Activated CD4-positive, alpha-beta memory T cell treated with anti-CD3 and anti-CD28 coated beads for 36 hours (primary cell): ENCODE measurements at regions of chr16 and their contacts with region 1.

Region 1: DNA sequence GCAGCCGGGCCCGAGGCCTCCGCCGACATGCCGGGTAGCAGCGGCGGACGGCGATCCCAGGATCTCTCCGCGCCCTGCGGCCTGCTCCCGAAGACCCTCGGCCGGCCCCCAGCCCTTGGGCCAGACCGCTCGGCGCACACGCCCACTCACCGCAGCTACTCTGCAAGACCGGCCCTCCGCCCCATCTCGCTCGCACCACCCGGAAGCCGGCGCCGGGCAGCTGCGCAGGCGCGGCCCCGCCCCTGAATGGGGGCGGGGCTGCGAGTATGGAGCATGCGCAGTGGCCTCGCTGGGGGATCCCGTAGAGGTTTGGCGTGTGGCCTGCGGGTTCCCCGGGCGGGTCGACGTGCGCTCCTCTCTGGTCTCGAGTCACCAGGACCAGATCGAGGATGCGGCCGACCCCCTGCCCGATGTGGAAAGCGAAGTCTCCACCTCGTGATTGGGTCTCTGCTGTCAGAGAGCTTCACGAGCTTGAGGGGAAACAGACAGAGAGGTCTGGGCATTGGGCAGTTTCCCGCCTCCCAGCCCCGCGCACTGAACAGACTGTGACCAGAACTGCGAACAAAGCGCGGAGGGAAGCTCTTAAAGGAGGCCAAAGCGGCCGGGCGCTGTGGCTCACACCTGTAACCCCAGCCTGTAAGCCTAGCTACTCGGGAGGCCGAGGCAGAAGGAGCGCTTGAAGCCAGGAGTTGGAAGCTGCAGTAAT is at the start of gene KCTD13:
- DNase-seq: peak; percentile 93
- H3K4me3 Mint-ChIP-seq: peak within 1 kb of the TSS; percentile 82
- H3K27ac Mint-ChIP-seq: peak within 1 kb of the TSS; percentile 89
- H3K4me1 Mint-ChIP-seq: peaks cover 36% of the 10 kb centered on the region
- H3K27me3 Mint-ChIP-seq: no peaks in the 10 kb centered on the region
- total RNA-seq, gene KCTD13: 36.6 to 37.9 TPM

Region 2: GRCh38 chr16:29710227-29711219 is 215.6 kb before region 1 on chr16:
- CTCF ChIA-PET with region 1: no interaction called
- POLR2A ChIA-PET with region 1: no interaction called
- intact Hi-C with region 1: no loop called
- DNase-seq: peak; percentile 33
- H3K4me3 Mint-ChIP-seq: no peak overlapping the region
- H3K27ac Mint-ChIP-seq: no peak overlapping the region
- H3K4me1 Mint-ChIP-seq: peaks cover 15% of the 10 kb centered on the region
- H3K27me3 Mint-ChIP-seq: no peaks in the 10 kb centered on the region

Region 3: GRCh38 chr16:29815793-29816693 is 110.1 kb before region 1 on chr16 and contains the start of gene PAGR1:
- CTCF ChIA-PET with region 1: no interaction called
- POLR2A ChIA-PET with region 1: no interaction called
- intact Hi-C with region 1: no loop called
- DNase-seq: peak; percentile 99
- H3K4me3 Mint-ChIP-seq: peak within 1 kb of the TSS; percentile 98
- H3K27ac Mint-ChIP-seq: peak within 1 kb of the TSS; percentile 90
- H3K4me1 Mint-ChIP-seq: peaks cover 41% of the 10 kb centered on the region
- H3K27me3 Mint-ChIP-seq: no peaks in the 10 kb centered on the region
- total RNA-seq, gene PAGR1: 21.9 to 24.0 TPM

Region 4: GRCh38 chr16:29862884-29863668 is 63.1 kb before region 1 on chr16 and contains the start of gene CDIPT:
- CTCF ChIA-PET with region 1: no interaction called
- POLR2A ChIA-PET with region 1: interaction called, 7 read pairs
- intact Hi-C with region 1: loop called (anchors 2 kb)
- DNase-seq: peak; percentile 95
- H3K4me3 Mint-ChIP-seq: peak within 1 kb of the TSS; percentile 94
- H3K27ac Mint-ChIP-seq: peak within 1 kb of the TSS; percentile 92
- H3K4me1 Mint-ChIP-seq: peaks cover 18% of the 10 kb centered on the region
- H3K27me3 Mint-ChIP-seq: no peaks in the 10 kb centered on the region
- total RNA-seq, gene CDIPT: 39.5 to 43.9 TPM

Region 5: DNA sequence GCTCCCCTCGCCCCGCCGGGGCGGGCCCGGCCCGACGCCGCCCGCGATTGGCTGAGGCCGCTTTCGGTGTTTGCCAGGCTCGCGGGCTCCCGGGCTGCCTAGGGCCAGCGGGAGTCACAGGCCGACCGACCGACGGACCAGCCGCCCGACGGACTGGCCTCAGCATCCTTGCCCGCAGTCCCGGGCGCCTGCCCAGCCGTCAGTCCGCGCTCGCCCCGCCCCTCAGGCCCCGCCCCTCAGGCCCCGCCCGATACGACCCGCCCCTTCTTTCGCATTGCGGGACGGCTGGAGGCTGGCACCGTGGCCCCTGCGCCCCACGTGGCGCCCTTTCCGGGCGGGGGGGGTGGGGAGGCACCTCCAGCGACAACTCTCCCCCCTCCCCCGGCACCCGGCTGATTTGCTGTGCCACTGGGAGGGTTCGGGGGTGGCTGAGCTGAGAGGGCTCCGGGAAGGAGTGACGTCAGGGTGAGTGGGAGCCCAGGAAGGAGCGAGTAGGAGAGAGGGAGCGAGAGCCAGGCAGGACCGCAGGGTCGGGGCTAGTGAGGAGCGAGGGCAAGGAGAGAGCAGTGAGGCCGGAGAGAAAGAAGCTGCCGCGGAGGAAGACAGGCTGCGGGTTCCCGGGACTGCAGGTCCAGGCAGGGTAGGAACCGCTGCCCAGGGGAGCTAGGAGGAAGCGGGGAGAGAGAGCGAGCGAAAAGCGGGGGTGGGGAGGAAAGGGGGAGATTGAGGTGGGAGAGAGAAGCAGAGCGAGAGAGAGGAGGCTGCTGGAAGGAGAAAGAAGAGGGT is 25.9 kb before region 1 on chr16 and contains the start of gene ASPHD1:
- CTCF ChIA-PET with region 1: interaction called, 6 read pairs
- POLR2A ChIA-PET with region 1: interaction called, 7 read pairs
- intact Hi-C with region 1: loop called (anchors 1 kb)
- DNase-seq: peak; percentile 71
- H3K4me3 Mint-ChIP-seq: peak within 1 kb of the TSS; percentile 77
- H3K27ac Mint-ChIP-seq: no peak within 1 kb of the TSS
- H3K4me1 Mint-ChIP-seq: peaks cover 8% of the 10 kb centered on the region
- H3K27me3 Mint-ChIP-seq: peaks cover 18% of the 10 kb centered on the region
- total RNA-seq, gene ASPHD1: 1.6 to 1.9 TPM

Region 6: GRCh38 chr16:29961479-29962343 is 35.6 kb after region 1 on chr16 and contains the start of gene TMEM219:
- CTCF ChIA-PET with region 1: interaction called, 5 read pairs
- POLR2A ChIA-PET with region 1: interaction called, 8 read pairs
- intact Hi-C with region 1: loop called (anchors 5 kb)
- DNase-seq: peak; percentile 94
- H3K4me3 Mint-ChIP-seq: peak within 1 kb of the TSS; percentile 85
- H3K27ac Mint-ChIP-seq: peak within 1 kb of the TSS; percentile 83
- H3K4me1 Mint-ChIP-seq: peaks cover 16% of the 10 kb centered on the region
- H3K27me3 Mint-ChIP-seq: no peaks in the 10 kb centered on the region
- total RNA-seq, gene TMEM219: 57.1 to 64.8 TPM

Region 7: GRCh38 chr16:29973384-29974246 is 47.5 kb after region 1 on chr16 and contains the start of gene TAOK2:
- CTCF ChIA-PET with region 1: interaction called, 4 read pairs
- POLR2A ChIA-PET with region 1: interaction called, 13 read pairs
- intact Hi-C with region 1: loop called (anchors 2 kb)
- DNase-seq: peak; percentile 98
- H3K4me3 Mint-ChIP-seq: peak within 1 kb of the TSS; percentile 89
- H3K27ac Mint-ChIP-seq: peak within 1 kb of the TSS; percentile 86
- H3K4me1 Mint-ChIP-seq: peaks cover 34% of the 10 kb centered on the region
- H3K27me3 Mint-ChIP-seq: no peaks in the 10 kb centered on the region
- total RNA-seq, gene TAOK2: 27.2 to 28.2 TPM

Region 8: GRCh38 chr16:29995911-29996772 is 70.0 kb after region 1 on chr16 and contains the start of gene INO80E:
- CTCF ChIA-PET with region 1: no interaction called
- POLR2A ChIA-PET with region 1: interaction called, 11 read pairs
- intact Hi-C with region 1: loop called (anchors 1 kb)
- DNase-seq: peak; percentile 100
- H3K4me3 Mint-ChIP-seq: peak within 1 kb of the TSS; percentile 99
- H3K27ac Mint-ChIP-seq: peak within 1 kb of the TSS; percentile 99
- H3K4me1 Mint-ChIP-seq: peaks cover 33% of the 10 kb centered on the region
- H3K27me3 Mint-ChIP-seq: no peaks in the 10 kb centered on the region
- total RNA-seq, gene INO80E: 84.1 to 94.0 TPM